Mammary epithelial cell (primary cell): ENCODE measurements at regions of chr7 and their contacts with region 1.

Region 1: DNA sequence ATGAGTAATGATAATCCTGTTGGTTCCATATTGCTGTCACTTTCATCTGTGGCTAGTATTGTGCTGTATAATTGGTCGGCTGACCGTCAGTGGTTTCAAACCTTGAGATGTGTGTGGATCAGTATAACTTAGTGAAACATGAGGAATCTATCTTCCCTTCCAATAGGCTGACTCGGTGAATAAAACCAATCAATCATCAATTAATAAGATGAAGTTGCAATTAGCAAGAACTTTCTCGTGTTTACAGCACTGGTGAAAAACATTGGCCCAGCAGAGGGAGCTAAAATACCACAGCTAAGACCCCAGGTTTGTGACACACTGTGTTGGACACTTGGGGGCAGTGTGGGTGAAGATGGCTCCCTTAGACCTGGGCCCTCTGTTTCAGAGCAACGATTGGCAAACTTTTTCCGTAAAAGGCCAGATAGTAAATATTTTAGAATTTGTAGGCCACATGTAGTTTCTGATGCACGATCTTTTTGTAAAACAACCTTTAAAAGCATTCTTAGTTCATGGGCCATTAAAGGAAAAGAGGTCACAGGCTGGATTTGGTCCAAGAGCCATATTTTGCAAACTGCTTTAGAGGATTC is 47.8 kb downstream of the STRA8 start:
- DNase-seq: peak; percentile 69
- H3K4me3 ChIP-seq: no peak overlapping the region
- H3K27ac ChIP-seq: no peak overlapping the region
- H3K4me1 ChIP-seq: peaks cover 20% of the 10 kb centered on the region
- H3K27me3 ChIP-seq: no peaks in the 10 kb centered on the region
- CTCF ChIP-seq: peak; percentile 99

Region 2: GRCh38 chr7:135349746-135350379 is 68.4 kb after region 1 on chr7:
- CTCF ChIA-PET with region 1: no interaction called
- dilution Hi-C with region 1: loop called (anchors 5 kb)
- in situ Hi-C with region 1: no loop called
- intact Hi-C with region 1: no loop called
- DNase-seq: no peak
- H3K4me3 ChIP-seq: no peak overlapping the region
- H3K27ac ChIP-seq: no peak overlapping the region
- H3K4me1 ChIP-seq: no peaks in the 10 kb centered on the region
- H3K27me3 ChIP-seq: no peaks in the 10 kb centered on the region
- CTCF ChIP-seq: no peak

Region 3: DNA sequence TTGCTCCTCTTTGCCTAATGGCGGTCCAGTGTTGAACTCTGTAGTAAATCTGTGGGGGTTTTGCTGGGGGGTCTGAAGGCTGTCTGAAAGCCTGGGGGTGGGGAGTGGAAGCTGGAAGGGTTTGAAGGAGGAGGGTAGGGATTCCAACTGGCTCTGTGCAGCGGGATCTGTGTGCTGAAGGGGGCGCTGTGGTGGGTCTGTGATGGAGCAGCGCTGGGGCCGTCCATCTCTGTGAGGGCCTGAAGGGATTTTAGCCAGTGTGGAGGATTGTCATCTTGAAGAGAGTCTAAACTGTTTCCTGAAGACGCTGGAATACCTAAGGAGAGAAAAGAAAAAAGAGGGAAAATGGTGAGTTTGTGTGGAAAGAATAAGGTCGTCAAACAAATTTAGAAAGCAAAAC is 81.4 kb after region 1 on chr7:
- CTCF ChIA-PET with region 1: no interaction called
- dilution Hi-C with region 1: no loop called
- in situ Hi-C with region 1: no loop called
- intact Hi-C with region 1: no loop called
- DNase-seq: no peak
- H3K4me3 ChIP-seq: no peak overlapping the region
- H3K27ac ChIP-seq: no peak overlapping the region
- H3K4me1 ChIP-seq: no peaks in the 10 kb centered on the region
- H3K27me3 ChIP-seq: no peaks in the 10 kb centered on the region
- CTCF ChIP-seq: no peak

Region 4: DNA sequence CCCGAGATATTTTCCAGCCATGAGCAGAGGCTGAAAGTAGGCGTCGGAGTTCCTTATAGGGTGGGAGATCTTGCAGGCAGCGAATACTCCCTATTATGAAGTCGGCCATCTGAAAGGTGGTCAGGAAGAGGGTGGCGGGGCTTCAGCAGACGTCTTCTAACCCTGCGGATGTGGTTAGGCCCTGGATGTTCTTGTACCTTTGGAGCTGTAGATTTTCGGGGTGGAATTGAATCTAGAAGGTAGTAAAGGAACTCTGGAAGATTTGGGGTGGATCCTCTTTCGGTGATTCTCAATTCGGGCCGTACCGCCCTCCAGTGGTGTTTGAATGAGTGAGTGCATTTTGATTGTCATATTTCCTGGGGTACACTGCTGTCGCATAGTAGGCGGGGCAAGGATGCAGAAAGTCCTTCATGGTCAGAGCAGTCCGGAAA is 276.9 kb after region 1 on chr7:
- CTCF ChIA-PET with region 1: no interaction called
- dilution Hi-C with region 1: no loop called
- in situ Hi-C with region 1: no loop called
- intact Hi-C with region 1: loop called (anchors 1 kb)
- DNase-seq: peak; percentile 64
- H3K4me3 ChIP-seq: peak overlapping the region; percentile 76 to 83 (median 79)
- H3K27ac ChIP-seq: peak overlapping the region; percentile 94
- H3K4me1 ChIP-seq: peaks cover 11% of the 10 kb centered on the region
- H3K27me3 ChIP-seq: no peaks in the 10 kb centered on the region
- CTCF ChIP-seq: peak; percentile 39 to 64

Region 5: GRCh38 chr7:135645296-135645904 is 363.9 kb after region 1 on chr7:
- CTCF ChIA-PET with region 1: no interaction called
- dilution Hi-C with region 1: no loop called
- in situ Hi-C with region 1: no loop called
- intact Hi-C with region 1: loop called (anchors 1 kb)
- DNase-seq: peak; percentile 26
- H3K4me3 ChIP-seq: no peak overlapping the region
- H3K27ac ChIP-seq: no peak overlapping the region
- H3K4me1 ChIP-seq: no peaks in the 10 kb centered on the region
- H3K27me3 ChIP-seq: no peaks in the 10 kb centered on the region
- CTCF ChIP-seq: peak; percentile 70 to 73

Region 6: DNA sequence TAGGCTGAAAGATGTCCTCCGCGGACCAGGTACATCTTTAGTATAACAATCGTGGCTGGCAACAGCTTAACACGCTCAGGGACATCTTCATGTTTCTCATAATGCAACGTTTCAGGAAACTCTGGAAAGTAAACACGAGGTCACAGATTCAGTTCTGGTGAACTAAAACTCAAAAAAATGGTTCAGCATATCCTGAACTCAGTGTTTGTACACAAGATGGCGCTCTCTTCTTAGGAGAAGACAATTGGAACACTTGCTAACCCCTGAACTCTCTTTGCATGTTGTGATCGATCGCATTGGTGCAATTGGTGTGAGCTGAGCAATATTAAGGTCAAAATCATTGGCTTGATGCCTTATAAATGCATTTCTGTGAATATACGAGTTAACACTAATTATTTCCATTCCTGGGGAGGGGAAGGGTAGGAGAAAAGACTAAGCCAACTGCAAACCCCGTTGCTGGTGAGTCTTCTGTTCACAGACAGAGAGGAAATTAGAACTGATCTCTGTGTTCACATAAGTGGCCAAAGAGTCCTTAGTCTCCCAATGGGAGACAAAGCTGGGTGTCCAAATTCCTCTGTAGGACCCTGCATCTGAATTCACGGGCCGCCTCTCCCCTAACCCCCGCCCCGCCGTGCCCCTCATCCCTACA is 519.7 kb after region 1 on chr7:
- CTCF ChIA-PET with region 1: no interaction called
- dilution Hi-C with region 1: no loop called
- in situ Hi-C with region 1: no loop called
- intact Hi-C with region 1: loop called (anchors 2 kb)
- DNase-seq: peak; percentile 51
- H3K4me3 ChIP-seq: no peak overlapping the region
- H3K27ac ChIP-seq: no peak overlapping the region
- H3K4me1 ChIP-seq: peaks cover 11% of the 10 kb centered on the region
- H3K27me3 ChIP-seq: no peaks in the 10 kb centered on the region
- CTCF ChIP-seq: peak; percentile 86 to 87